Activated CD4-positive, alpha-beta memory T cell treated with anti-CD3 and anti-CD28 coated beads, Interleukin-2, amount 10 ng/mL, durations not matched to agents 7 days and 5 days (primary cell): ENCODE measurements at regions of chr10 and their contacts with region 1.

Region 1: DNA sequence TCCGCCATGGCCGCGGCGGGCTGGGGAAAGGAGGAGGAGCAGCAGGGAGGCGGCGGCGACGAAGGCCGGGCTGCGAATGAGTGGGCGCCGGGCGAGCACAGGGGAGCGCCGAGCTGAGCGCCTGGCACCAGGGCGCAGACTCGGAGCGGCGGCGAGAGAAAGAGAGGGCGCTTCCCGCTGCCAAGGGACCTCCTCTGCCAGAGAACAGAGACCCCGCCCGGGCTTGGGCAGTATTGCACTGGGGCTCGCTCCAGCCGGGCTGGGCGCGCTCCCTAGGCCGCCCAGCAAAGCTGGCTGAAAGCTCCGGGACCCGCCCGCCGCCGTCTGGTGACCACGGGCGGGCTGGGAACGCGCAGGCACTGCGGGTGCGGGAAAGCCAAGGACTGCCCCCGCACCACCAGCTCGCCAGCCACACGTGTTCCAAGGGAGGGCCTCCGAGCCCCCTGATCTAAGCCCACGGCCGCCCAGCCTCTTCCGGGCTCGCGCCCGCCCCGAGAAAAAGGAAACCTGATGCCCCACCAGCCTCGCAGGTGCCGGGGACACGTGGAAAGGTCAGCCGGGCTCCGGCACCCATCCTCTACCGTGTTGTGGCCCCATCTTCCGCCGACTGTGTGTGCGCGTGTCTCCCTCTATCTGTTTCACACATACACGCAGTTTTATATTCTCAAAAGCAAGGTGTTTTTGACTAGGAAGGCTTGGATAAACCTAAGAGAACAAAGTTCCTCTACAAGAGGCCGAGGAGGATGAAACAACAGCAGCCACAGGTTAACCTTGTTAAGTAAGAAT is at the start of gene CCDC6:
- DNase-seq: peak; percentile 92
- H3K4me3 Mint-ChIP-seq: peak within 1 kb of the TSS; percentile 90
- H3K27ac Mint-ChIP-seq: peak within 1 kb of the TSS; percentile 97
- H3K4me1 Mint-ChIP-seq: peaks cover 51% of the 10 kb centered on the region
- H3K27me3 Mint-ChIP-seq: no peaks in the 10 kb centered on the region
- total RNA-seq, gene CCDC6: 22.4 to 22.6 TPM

Region 2: DNA sequence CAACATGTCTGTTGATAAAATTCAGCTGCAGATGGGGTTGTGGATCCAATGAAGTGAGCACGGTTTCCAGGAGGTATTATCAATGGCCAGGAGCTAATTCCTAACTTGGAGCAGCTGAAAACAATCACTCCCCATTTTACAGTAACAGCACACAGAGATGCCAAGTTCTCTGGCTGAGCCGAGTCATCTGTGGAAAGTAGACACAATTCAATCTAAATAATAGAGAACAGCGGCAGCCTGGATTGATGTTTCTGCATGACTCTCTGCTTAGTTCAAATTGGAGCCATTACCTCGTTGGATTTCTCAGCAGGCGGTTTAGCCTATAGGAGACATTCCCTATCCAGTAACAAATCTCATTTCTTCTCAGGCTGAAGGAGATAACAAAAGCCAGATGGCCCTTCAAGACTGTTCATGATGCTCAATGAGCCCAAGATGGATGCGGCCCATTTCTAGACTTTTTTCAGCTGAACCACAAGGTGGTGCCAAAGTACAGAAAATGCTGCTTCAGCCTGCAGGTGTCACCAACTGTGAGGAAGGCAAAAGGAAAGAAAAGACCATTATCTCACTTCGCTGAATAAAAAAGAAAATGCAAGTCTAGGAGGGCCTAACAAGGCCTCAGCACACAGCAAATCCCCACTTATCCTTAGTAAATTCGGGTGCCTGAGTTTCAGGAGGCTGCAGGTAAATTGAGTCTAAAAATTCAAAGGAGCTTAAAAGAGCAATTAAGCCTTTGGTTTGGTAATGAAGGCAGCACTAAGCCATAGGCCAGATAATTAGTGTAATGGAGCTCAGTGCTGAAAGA is 280.7 kb before region 1 on chr10:
- CTCF ChIA-PET with region 1: interaction called, 11 read pairs
- POLR2A ChIA-PET with region 1: no interaction called
- DNase-seq: peak; percentile 49
- H3K4me3 Mint-ChIP-seq: no peak overlapping the region
- H3K27ac Mint-ChIP-seq: no peak overlapping the region
- H3K4me1 Mint-ChIP-seq: peaks cover 3% of the 10 kb centered on the region
- H3K27me3 Mint-ChIP-seq: peaks cover 20% of the 10 kb centered on the region

Region 3: DNA sequence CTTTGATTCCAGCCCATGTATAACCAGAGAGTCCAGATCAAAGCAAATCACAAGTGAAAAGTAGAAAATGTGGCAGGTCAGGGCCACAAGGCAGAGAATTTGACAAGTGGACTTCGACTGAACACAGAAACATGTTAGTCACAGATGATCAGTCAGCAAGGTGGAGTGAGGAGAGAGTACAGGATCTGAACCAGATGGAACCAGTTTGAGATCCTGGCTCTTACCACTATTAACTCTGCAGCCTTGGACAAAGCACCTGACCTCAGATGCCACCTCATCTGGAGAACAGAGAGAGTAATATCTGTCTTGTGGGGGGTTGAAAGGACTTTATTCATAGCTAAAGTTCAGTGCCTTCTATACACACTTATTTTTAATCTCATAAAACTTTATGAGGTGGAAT is 157.8 kb before region 1 on chr10:
- CTCF ChIA-PET with region 1: no interaction called
- POLR2A ChIA-PET with region 1: no interaction called
- DNase-seq: no peak
- H3K4me3 Mint-ChIP-seq: no peak overlapping the region
- H3K27ac Mint-ChIP-seq: no peak overlapping the region
- H3K4me1 Mint-ChIP-seq: no peaks in the 10 kb centered on the region
- H3K27me3 Mint-ChIP-seq: peaks cover 12% of the 10 kb centered on the region

Region 4: GRCh38 chr10:59801171-59801570 is 105.4 kb before region 1 on chr10:
- CTCF ChIA-PET with region 1: no interaction called
- POLR2A ChIA-PET with region 1: no interaction called
- DNase-seq: no peak
- H3K4me3 Mint-ChIP-seq: no peak overlapping the region
- H3K27ac Mint-ChIP-seq: no peak overlapping the region
- H3K4me1 Mint-ChIP-seq: peaks cover 3% of the 10 kb centered on the region
- H3K27me3 Mint-ChIP-seq: no peaks in the 10 kb centered on the region

Region 5: DNA sequence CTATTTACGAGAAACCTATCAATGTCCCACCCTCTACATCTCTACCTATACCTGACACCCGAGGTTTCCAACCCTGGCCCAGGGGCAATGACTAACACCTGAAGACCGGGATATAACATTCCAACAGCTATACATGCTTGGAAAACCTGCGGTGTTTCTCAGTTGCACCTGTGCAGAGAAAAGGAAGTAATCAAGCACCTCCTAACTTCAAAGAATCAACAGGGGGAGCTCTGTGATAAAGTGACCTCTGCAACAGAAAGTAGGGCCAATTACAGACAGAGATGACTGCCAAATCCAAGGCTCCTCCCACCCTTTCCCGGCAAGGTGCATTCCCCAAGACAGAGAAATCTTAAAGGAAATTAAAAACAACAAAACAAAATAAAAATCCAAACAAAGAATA is 41.5 kb before region 1 on chr10:
- CTCF ChIA-PET with region 1: interaction called, 49 read pairs
- POLR2A ChIA-PET with region 1: interaction called, 39 read pairs
- DNase-seq: no peak
- H3K4me3 Mint-ChIP-seq: no peak overlapping the region
- H3K27ac Mint-ChIP-seq: no peak overlapping the region
- H3K4me1 Mint-ChIP-seq: peaks cover 11% of the 10 kb centered on the region
- H3K27me3 Mint-ChIP-seq: no peaks in the 10 kb centered on the region

Region 6: DNA sequence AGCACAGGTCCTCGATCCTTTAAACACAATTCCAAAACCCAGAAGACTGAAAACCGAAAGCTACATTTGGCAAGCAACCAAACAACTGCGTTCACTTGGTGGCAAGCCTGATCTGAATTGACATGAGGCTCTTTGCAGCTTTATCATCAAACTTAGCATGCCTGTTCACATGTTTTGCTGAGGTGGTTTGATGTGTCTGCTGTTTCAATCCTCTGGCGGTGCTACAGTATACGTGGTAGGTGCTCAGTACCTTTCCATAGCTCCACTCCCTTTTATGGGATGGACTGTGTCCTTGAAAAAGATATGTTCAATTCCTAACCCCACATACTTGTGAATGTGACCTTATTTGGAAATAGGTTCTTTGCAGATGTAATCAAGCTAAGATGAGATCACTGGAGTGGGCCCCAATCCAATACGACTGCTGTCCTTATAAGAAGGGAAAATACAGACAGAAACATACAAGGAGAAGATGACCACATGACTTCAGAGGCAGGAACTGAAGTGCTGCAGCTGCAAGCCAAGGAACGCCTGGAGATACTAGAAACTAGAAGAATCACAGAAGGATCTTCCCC is 33.6 kb before region 1 on chr10:
- CTCF ChIA-PET with region 1: interaction called, 10 read pairs
- POLR2A ChIA-PET with region 1: interaction called, 6 read pairs
- DNase-seq: no peak
- H3K4me3 Mint-ChIP-seq: no peak overlapping the region
- H3K27ac Mint-ChIP-seq: no peak overlapping the region
- H3K4me1 Mint-ChIP-seq: peaks cover 38% of the 10 kb centered on the region
- H3K27me3 Mint-ChIP-seq: no peaks in the 10 kb centered on the region

Region 7: DNA sequence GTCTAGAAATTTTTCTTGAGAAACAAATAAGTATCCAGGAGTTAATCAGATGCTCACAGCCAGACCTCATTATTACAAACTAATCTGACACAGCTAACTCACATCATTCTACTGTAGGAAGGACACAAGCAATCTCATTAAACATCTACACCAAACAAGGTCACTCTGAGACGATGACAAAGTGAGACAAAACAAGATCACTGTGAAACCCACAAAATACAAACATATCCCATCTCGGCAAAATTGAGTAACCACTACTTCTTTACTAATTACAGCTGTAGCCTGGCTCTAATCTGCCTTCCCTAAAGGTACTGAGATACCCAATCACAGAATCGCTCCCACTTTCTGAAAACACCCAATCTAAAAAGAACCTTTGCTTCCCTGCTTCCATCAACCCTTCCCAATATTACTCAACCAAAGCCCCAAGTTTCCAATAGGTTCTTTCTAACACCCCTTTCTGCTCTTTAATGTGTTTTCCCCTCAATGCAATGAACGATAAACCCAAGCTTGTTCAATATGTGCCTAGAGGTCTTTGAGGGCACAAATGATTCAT is 27.2 kb before region 1 on chr10:
- CTCF ChIA-PET with region 1: interaction called, 6 read pairs
- POLR2A ChIA-PET with region 1: interaction called, 22 read pairs
- DNase-seq: no peak
- H3K4me3 Mint-ChIP-seq: peak overlapping the region; percentile 30
- H3K27ac Mint-ChIP-seq: peak overlapping the region; percentile 69
- H3K4me1 Mint-ChIP-seq: peaks cover 71% of the 10 kb centered on the region
- H3K27me3 Mint-ChIP-seq: no peaks in the 10 kb centered on the region

Region 8: DNA sequence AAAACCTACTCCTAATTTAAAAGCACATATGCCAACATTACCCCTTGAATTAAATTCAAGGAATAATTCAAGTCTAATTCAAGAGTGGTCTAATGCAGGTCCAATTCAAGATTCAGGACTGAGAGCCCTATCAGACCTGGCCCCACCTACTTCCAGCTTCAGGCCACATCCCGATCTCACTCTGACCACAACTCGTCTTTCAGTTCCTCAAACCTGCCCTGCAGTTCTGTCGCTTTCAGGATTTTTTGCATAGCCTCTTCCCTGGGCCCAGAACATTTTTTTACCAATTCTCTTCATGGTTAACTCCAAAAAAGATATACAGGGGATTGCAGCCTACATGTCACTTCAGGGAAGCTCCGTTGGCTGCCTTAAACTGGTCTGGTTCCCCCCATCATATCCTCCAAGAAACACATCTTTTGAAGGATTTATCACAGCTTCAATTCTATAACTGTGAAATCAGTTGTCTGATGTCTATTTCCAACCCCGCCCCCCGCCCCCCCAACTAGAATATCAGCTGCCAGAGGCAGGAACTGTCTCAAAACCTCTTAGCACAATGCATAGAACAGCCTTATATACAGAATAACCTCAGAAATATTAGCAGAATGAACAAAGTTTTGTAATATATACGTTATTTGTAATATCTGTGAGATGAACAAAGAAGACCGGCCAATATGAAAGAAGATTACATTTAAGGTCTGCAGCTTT is 21.0 kb before region 1 on chr10:
- CTCF ChIA-PET with region 1: interaction called, 6 read pairs
- POLR2A ChIA-PET with region 1: interaction called, 43 read pairs
- DNase-seq: peak; percentile 38
- H3K4me3 Mint-ChIP-seq: no peak overlapping the region
- H3K27ac Mint-ChIP-seq: peak overlapping the region; percentile 37
- H3K4me1 Mint-ChIP-seq: peaks cover 72% of the 10 kb centered on the region
- H3K27me3 Mint-ChIP-seq: no peaks in the 10 kb centered on the region

Region 9: DNA sequence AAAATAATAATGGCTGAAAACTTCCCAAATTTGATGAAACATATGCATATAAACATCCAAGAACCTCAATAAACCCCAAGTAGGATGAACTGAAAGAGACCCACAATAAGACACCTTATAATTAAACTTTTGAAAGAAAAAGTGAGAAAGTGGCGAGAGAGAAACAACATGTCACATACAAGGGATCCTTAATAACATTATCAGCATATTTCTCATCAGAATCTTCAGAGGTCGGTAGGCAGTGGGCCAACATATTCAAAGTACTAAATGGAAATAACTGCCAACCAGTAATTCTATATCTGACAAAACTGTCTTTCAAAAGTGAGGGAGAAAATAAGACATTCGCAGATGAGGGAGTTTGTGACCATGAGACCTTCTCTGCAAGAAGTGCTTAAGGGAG is 16.3 kb after region 1 on chr10:
- CTCF ChIA-PET with region 1: interaction called, 10 read pairs
- POLR2A ChIA-PET with region 1: interaction called, 3 read pairs
- DNase-seq: no peak
- H3K4me3 Mint-ChIP-seq: no peak overlapping the region
- H3K27ac Mint-ChIP-seq: no peak overlapping the region
- H3K4me1 Mint-ChIP-seq: no peaks in the 10 kb centered on the region
- H3K27me3 Mint-ChIP-seq: peaks cover 29% of the 10 kb centered on the region